ENCODE measurements at regions of chr1 and their contacts with region 1.

Region 1: DNA sequence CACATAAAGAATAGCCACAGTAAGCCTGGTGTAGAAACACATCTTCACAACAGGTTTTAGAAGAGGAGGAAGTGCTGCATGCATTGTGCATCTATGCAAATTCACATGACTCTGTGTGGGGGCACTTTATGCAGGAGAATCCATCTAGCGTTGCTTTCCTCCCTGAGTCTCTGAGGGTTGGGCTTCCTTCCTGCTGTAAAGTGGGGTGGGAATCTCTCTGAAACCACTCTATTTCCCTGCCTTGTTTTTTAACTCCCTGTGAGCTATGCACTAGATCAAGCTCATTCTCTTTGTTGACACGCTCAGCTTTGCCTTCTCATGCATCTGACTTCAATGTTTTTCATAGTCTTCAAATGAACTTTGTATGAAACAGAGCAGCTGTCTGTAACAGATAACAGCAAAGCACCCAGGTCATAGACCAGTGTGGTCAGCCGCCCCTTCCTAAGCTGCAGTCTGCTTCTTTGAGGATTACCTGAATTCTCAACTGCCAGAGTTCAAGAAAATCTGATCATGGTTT is 102.7 kb upstream of the DPH5 start:
- DNase-seq: peak in 9 of 10 donors; percentile 11 to 62 (median 41)
- ATAC-seq: peak; percentile 75 to 82
- H3K4me3 Mint-ChIP-seq: peak overlapping the region; percentile 44 to 79 (median 64)
- H3K27ac Mint-ChIP-seq: peak overlapping the region; percentile 83 to 98 (median 94)
- H3K4me1 Mint-ChIP-seq: peaks cover 32 to 81% (median 65%) of the 10 kb centered on the region in 4 donors
- H3K27me3 Mint-ChIP-seq: no peaks in the 10 kb centered on the region

Region 2: DNA sequence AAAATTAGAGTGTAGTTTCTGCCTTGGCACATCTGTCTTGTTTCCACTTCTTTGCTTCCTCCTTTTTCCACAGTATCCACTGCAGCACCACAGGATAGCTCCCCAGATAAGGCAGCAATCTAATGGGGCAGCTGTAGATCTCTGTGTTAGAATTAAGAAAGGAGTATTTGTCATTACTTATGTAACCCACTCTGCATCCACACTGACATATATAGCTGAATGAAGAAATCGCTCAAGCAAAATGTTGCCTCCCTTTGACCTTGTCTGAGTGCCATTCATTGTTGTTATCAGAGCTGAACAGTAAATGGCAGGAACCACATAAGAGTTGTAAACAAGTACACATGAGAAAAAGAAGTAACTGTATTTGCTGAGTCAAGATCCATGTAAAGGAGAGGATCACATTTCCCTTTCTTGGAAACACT is 56.8 kb before region 1 on chr1:
- POLR2A ChIA-PET with region 1: no interaction called
- DNase-seq: no peak
- ATAC-seq: no peak
- H3K4me3 Mint-ChIP-seq: peak overlapping the region in 1 of 10 donors; percentile 34
- H3K27ac Mint-ChIP-seq: peak overlapping the region in 6 of 10 donors; percentile 7 to 85 (median 52)
- H3K4me1 Mint-ChIP-seq: peaks cover 20 to 55% (median 49%) of the 10 kb centered on the region in 4 donors
- H3K27me3 Mint-ChIP-seq: no peaks in the 10 kb centered on the region

Region 3: DNA sequence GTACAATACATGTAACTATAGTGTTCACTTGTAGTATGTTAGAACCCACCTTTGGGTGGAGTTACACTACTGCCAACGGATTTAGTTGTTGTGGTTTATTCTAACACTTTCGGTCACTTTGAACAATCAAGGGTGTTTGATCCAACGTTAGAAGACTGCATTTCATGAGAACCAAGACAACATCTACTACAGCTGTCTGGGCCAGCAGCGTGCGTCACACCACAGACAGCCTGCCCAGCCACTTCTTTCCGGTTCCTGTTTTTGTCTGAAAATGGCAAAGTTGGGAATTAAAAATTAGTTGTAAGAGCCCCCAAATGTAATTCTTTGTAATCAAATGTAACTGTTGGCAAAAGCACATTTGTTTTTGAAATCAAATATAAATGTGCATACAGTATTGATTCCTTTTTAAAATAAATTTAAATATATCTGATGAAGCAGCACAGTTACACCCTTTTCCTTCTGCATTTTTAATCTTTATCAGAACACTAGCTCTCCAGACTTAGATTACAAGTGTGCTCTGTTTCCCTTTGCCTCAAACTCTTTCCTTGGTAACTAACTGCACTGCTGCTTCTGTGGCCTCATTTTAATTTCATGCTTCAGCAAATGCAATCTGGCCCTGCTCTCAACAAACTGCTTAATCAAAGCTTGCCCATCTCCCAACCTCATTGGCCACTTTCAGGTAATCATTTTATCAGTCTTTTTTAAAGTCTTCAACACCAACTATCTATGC is 16.1 kb before region 1 on chr1:
- POLR2A ChIA-PET with region 1: interaction called, 10 read pairs
- DNase-seq: peak; percentile 56 to 93 (median 84)
- ATAC-seq: peak; percentile 90 to 94
- H3K4me3 Mint-ChIP-seq: peak overlapping the region; percentile 50 to 86 (median 78)
- H3K27ac Mint-ChIP-seq: peak overlapping the region; percentile 97 to 100 (median 99)
- H3K4me1 Mint-ChIP-seq: peaks cover 39 to 72% (median 61%) of the 10 kb centered on the region in 4 donors
- H3K27me3 Mint-ChIP-seq: no peaks in the 10 kb centered on the region

Region 4: GRCh38 chr1:101161619-101162018 is 33.4 kb after region 1 on chr1:
- POLR2A ChIA-PET with region 1: no interaction called
- DNase-seq: no peak
- ATAC-seq: no peak
- H3K4me3 Mint-ChIP-seq: no peak overlapping the region
- H3K27ac Mint-ChIP-seq: no peak overlapping the region
- H3K4me1 Mint-ChIP-seq: peaks cover 0 to 2% (median 0%) of the 10 kb centered on the region in 4 donors
- H3K27me3 Mint-ChIP-seq: no peaks in the 10 kb centered on the region